H1 (cell line): ENCODE measurements at regions of chr1 and their contacts with region 1.

Region 1: GRCh38 chr1:46309401-46310159 is 6.1 kb downstream of the UQCRH start:
- DNase-seq: no peak
- H3K4me3 ChIP-seq: no peak overlapping the region
- H3K27ac ChIP-seq: no peak overlapping the region
- H3K4me1 ChIP-seq: peaks cover 0 to 13% (median 9%) of the 10 kb centered on the region in 4 experiments; a peak in 6 of 7 replicates
- H3K27me3 ChIP-seq: no peaks in the 10 kb centered on the region
- CTCF ChIP-seq: no peak
- EP300 ChIP-seq: no peak
- POLR2A ChIP-seq: no peak
- RAD21 ChIP-seq: no peak

Region 2: GRCh38 chr1:46219551-46220523 is 89.7 kb before region 1 on chr1:
- CTCF ChIA-PET with region 1: no interaction called
- POLR2A ChIA-PET with region 1: no interaction called
- DNase-seq: no peak
- H3K4me3 ChIP-seq: no peak overlapping the region
- H3K27ac ChIP-seq: no peak overlapping the region
- H3K4me1 ChIP-seq: peaks cover 3 to 11% (median 7%) of the 10 kb centered on the region in 4 experiments; a peak in 6 of 7 replicates
- H3K27me3 ChIP-seq: no peaks in the 10 kb centered on the region
- CTCF ChIP-seq: no peak
- EP300 ChIP-seq: no peak
- POLR2A ChIP-seq: no peak
- RAD21 ChIP-seq: no peak

Region 3: GRCh38 chr1:46285730-46286477 is 23.7 kb before region 1 on chr1:
- CTCF ChIA-PET with region 1: interaction called, 3 read pairs
- POLR2A ChIA-PET with region 1: interaction called, 689 read pairs
- DNase-seq: peak in 1 of 2 experiments; percentile 25
- H3K4me3 ChIP-seq: no peak overlapping the region
- H3K27ac ChIP-seq: no peak overlapping the region
- H3K4me1 ChIP-seq: no peaks in the 10 kb centered on the region; a peak in 1 of 7 replicates
- H3K27me3 ChIP-seq: no peaks in the 10 kb centered on the region
- CTCF ChIP-seq: no peak
- EP300 ChIP-seq: no peak
- POLR2A ChIP-seq: no peak
- RAD21 ChIP-seq: no peak

Region 4: GRCh38 chr1:46333300-46334029 is 23.9 kb after region 1 on chr1:
- CTCF ChIA-PET with region 1: interaction called, 8 read pairs
- POLR2A ChIA-PET with region 1: interaction called, 18 read pairs
- DNase-seq: peak in 1 of 2 experiments; percentile 34
- H3K4me3 ChIP-seq: no peak overlapping the region
- H3K27ac ChIP-seq: no peak overlapping the region
- H3K4me1 ChIP-seq: peaks cover 0 to 3% (median 0%) of the 10 kb centered on the region in 4 experiments; a peak in 1 of 7 replicates
- H3K27me3 ChIP-seq: no peaks in the 10 kb centered on the region
- CTCF ChIP-seq: peak in 2 of 3 experiments; percentile 50 to 55; a peak in 3 of 4 replicates
- EP300 ChIP-seq: no peak
- POLR2A ChIP-seq: no peak
- RAD21 ChIP-seq: peak; percentile 56 to 65

Region 5: DNA sequence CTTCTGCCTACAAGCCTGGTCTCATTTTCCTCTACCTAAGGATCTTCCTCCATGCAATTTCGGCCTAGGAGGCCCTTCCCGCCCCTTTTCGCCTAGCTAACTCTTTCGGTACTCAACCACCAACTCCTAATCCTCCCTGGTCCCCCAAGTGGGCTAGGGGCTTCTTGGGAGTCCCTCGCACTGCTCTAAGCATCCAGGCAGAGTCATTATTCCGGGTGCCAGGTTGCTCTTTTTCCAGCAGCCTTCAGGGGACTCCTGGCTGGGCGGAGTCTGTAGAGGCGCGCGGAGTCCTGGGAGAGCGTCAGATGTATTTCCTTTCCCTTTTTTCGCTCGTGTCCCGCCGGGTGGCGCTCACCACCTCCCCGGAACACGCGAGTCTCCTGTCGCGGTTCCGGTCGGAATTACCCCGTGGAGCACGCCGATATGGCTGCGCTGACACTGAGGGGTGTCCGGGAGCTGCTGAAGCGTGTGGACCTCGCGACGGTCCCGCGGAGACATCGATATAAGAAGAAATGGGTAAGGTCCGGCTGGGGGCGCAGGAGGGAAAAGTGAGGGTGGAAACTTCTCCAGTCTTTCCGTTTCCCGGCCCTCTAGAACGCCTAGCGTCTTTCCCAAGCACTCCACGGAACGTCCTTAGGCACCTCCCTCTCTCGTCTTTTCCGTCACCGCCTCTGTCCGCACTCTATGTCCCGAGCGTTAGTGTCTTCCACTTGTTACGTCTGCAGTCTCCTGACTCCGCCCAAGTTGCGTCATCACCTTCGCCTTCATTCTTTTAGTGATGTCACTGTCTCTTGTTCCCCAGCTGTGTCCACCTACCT is 31.0 kb after region 1 on chr1 and contains the start of gene NSUN4:
- CTCF ChIA-PET with region 1: interaction called, 21 read pairs
- POLR2A ChIA-PET with region 1: interaction called, 22 read pairs
- DNase-seq: peak; percentile 66 to 79
- H3K4me3 ChIP-seq: peak within 1 kb of the TSS; percentile 72 to 91 (median 86)
- H3K27ac ChIP-seq: peak within 1 kb of the TSS; percentile 83
- H3K4me1 ChIP-seq: peaks cover 0 to 7% (median 4%) of the 10 kb centered on the region in 4 experiments; a peak in 4 of 7 replicates
- H3K27me3 ChIP-seq: no peaks in the 10 kb centered on the region
- CTCF ChIP-seq: peak; percentile 65 to 72 (median 69)
- EP300 ChIP-seq: 0 out of 3 replicates have a peak, but pooled peaks of 1 of the 2 experiments have one; percentile 48
- POLR2A ChIP-seq: peak; percentile 69 to 74
- RAD21 ChIP-seq: peak; percentile 21 to 25; a peak in 3 of 4 replicates
- total RNA-seq, gene NSUN4: 13.7 and 15.7 TPM in 2 replicates